ENCODE measurements at regions of chr12 and their contacts with region 1.

Region 1: DNA sequence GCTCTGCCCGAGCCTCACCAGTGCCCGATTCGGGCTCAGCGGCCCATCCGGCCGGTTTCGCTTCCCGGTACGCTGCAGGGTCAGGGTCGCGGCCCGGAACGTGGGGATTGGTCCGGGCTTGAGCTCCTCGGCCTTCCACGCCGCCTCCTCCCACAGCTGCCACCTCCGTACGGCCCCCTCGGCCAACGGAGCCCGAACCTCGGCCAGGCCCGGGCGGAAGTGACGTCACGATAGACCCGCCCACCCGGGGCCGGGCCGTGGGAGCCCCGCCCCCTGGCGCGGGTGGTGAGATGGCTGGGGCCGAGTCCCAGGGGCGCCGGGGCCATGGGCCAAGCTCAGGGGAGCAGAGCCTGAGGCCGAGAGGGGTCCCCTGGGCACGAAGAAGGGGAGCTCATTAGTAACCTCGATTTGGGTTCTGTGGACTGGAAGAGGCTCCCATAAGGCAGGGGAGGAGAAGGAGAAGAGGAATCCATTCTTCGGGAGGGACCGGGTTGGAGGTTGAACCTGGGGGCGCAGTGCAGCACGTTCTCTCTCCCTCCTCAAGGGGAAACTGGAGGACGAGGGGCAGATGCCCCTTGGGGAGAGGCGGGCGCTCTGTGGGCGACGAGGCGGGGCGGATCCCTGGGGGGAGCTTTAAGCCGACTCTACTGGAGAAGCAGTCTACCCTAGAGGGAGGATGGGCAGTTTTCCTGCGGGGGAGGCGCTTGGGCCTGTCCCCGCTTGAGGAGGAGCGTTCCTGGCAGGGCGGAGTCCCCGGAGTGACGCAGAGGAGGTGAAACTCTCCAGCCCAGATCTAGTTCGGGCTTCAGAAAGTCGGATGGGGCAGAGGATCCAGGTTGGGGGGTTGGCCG is at the start of gene MLF2:
- DNase-seq: peak; percentile 99
- H3K4me3 ChIP-seq: peak within 1 kb of the TSS; percentile 79 to 89
- H3K27ac ChIP-seq: peak within 1 kb of the TSS; percentile 96 to 99
- H3K4me1 ChIP-seq: peaks cover 11% of the 10 kb centered on the region
- H3K27me3 ChIP-seq: no peaks in the 10 kb centered on the region
- CTCF ChIP-seq: peak in 3 of 4 experiments; percentile 97 to 100 (median 99)
- POLR2A ChIP-seq: peak; percentile 99
- total RNA-seq, gene MLF2: 267 to 282 TPM

Region 2: GRCh38 chr12:6563448-6564050 is 189.6 kb before region 1 on chr12:
- intact Hi-C with region 1: no loop called
- DNase-seq: no peak
- H3K4me3 ChIP-seq: no peak overlapping the region
- H3K27ac ChIP-seq: no peak overlapping the region
- H3K4me1 ChIP-seq: no peaks in the 10 kb centered on the region
- H3K27me3 ChIP-seq: no peaks in the 10 kb centered on the region
- CTCF ChIP-seq: peak; percentile 18 to 57 (median 46)
- POLR2A ChIP-seq: no peak

Region 3: GRCh38 chr12:6766651-6767349 is 13.7 kb after region 1 on chr12:
- intact Hi-C with region 1: loop called (anchors 1 kb)
- DNase-seq: peak; percentile 83
- H3K4me3 ChIP-seq: peak overlapping the region; percentile 89 to 91
- H3K27ac ChIP-seq: peak overlapping the region; percentile 92 to 99
- H3K4me1 ChIP-seq: peaks cover 12% of the 10 kb centered on the region
- H3K27me3 ChIP-seq: no peaks in the 10 kb centered on the region
- CTCF ChIP-seq: peak; percentile 58 to 91 (median 78)
- POLR2A ChIP-seq: peak; percentile 73

Region 4: GRCh38 chr12:6778574-6779550 is 25.7 kb after region 1 on chr12:
- intact Hi-C with region 1: loop called (anchors 2 kb)
- DNase-seq: peak; percentile 98
- H3K4me3 ChIP-seq: peak overlapping the region; percentile 20 to 34
- H3K27ac ChIP-seq: peak overlapping the region; percentile 89 to 92
- H3K4me1 ChIP-seq: peaks cover 2% of the 10 kb centered on the region
- H3K27me3 ChIP-seq: no peaks in the 10 kb centered on the region
- CTCF ChIP-seq: peak; percentile 93 to 100 (median 98)
- POLR2A ChIP-seq: peak; percentile 52

Region 5: DNA sequence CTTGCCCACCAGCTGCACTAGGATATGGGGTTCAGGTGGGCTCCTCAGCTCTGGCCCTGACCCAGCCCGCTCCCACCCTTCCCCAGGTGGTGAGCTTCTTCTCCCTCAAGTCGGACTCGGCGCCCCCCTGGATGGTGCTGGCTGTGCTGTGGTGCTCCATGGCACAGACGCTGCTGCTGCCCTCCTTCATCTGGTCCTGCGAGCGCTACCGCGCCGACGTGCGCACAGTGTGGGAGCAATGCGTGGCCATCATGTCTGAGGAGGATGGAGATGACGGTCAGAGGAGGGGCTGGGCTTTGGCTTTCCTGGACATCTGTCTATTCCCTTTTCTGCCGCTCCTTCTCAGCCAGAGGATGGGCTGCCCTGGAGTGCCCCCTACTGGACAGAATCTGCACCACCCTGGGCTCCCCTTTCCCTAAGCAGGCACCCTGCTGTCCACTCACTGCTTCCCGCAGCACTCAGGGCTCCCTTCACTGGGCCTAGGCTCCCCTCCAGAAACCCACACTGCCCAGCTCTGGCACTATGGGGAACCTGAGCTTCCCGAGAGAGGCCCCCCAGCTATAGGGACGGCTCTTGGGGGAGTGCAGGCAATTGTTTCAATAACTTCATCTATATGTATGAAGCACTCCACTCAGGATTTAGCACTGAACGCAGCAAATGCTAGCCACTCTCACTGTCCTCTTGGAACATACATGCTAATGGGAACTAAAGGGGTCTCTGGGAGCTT is 72.4 kb after region 1 on chr12:
- intact Hi-C with region 1: loop called (anchors 5 kb)
- DNase-seq: peak; percentile 77
- H3K4me3 ChIP-seq: no peak overlapping the region
- H3K27ac ChIP-seq: no peak overlapping the region
- H3K4me1 ChIP-seq: no peaks in the 10 kb centered on the region
- H3K27me3 ChIP-seq: no peaks in the 10 kb centered on the region
- CTCF ChIP-seq: peak; percentile 89 to 94 (median 93)
- POLR2A ChIP-seq: no peak

Region 6: GRCh38 chr12:7197841-7198240 is 444.7 kb after region 1 on chr12:
- intact Hi-C with region 1: no loop called
- DNase-seq: no peak
- H3K4me3 ChIP-seq: no peak overlapping the region
- H3K27ac ChIP-seq: no peak overlapping the region
- H3K4me1 ChIP-seq: no peaks in the 10 kb centered on the region
- H3K27me3 ChIP-seq: no peaks in the 10 kb centered on the region
- CTCF ChIP-seq: no peak
- POLR2A ChIP-seq: no peak